ENCODE measurements at regions of chr16 and their contacts with region 1.

Region 1: GRCh38 chr16:2682209-2683021 is at the start of gene KCTD5:
- DNase-seq: peak; percentile 98
- H3K4me3 Mint-ChIP-seq: peak within 1 kb of the TSS; percentile 94
- H3K27ac Mint-ChIP-seq: peak within 1 kb of the TSS; percentile 93
- H3K4me1 Mint-ChIP-seq: peaks cover 28% of the 10 kb centered on the region
- H3K27me3 Mint-ChIP-seq: no peaks in the 10 kb centered on the region
- total RNA-seq, gene KCTD5: 61.8 to 62.7 TPM

Region 2: GRCh38 chr16:2609832-2610470 is 72.5 kb before region 1 on chr16:
- CTCF ChIA-PET with region 1: no interaction called
- POLR2A ChIA-PET with region 1: no interaction called
- intact Hi-C with region 1: no loop called
- DNase-seq: no peak
- H3K4me3 Mint-ChIP-seq: no peak overlapping the region
- H3K27ac Mint-ChIP-seq: no peak overlapping the region
- H3K4me1 Mint-ChIP-seq: peaks cover 11% of the 10 kb centered on the region
- H3K27me3 Mint-ChIP-seq: no peaks in the 10 kb centered on the region

Region 3: DNA sequence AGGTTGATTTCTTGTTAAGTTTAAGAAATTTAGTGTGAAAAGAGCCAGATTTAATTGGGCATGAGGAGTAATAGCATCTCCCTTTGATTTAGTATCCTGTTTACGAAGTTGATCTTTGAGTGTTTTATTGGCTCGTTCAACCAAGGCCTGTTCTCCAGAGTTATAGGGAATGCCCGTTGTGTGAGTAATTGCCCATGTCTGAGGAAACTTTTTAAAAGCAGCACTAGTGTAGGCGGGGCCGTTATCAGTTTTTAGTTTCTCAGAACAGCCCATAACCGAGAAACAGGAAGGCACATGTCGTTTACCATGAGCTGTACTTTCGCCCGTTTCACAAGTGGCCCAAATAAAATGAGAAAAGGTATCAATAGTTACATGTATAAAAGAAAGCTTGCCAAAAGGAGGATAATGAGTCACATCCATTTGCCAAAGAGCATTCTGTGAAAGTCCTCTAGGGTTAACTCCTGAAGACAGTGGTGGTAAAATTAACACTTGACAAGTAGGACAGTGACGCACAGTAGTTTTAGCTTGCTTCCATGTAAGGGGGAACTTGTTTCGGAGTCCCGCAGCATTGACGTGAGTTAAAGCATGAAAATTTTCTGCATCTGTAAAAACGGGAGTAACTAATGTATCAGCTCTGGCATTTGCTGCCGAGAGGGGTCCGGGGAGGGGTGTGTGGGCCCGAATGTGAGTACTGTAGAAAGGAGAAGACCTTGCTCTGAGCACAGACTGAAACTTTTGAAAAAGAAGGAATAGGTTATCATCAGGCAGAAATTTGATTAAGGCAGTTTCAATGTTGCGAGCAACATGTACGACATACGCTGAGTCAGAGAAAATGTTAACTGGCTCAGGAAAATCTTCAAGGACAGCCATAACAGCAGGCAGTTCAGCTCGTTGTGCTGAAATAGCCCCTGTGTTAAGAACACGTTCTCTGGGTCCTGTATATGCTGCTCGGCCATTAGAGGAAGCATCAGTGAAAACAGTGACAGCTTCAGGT is 18.6 kb before region 1 on chr16:
- CTCF ChIA-PET with region 1: interaction called, 8 read pairs
- POLR2A ChIA-PET with region 1: interaction called, 7 read pairs
- intact Hi-C with region 1: loop called (anchors 1 kb)
- DNase-seq: peak; percentile 87
- H3K4me3 Mint-ChIP-seq: peak overlapping the region; percentile 88
- H3K27ac Mint-ChIP-seq: peak overlapping the region; percentile 98
- H3K4me1 Mint-ChIP-seq: peaks cover 79% of the 10 kb centered on the region
- H3K27me3 Mint-ChIP-seq: no peaks in the 10 kb centered on the region

Region 4: DNA sequence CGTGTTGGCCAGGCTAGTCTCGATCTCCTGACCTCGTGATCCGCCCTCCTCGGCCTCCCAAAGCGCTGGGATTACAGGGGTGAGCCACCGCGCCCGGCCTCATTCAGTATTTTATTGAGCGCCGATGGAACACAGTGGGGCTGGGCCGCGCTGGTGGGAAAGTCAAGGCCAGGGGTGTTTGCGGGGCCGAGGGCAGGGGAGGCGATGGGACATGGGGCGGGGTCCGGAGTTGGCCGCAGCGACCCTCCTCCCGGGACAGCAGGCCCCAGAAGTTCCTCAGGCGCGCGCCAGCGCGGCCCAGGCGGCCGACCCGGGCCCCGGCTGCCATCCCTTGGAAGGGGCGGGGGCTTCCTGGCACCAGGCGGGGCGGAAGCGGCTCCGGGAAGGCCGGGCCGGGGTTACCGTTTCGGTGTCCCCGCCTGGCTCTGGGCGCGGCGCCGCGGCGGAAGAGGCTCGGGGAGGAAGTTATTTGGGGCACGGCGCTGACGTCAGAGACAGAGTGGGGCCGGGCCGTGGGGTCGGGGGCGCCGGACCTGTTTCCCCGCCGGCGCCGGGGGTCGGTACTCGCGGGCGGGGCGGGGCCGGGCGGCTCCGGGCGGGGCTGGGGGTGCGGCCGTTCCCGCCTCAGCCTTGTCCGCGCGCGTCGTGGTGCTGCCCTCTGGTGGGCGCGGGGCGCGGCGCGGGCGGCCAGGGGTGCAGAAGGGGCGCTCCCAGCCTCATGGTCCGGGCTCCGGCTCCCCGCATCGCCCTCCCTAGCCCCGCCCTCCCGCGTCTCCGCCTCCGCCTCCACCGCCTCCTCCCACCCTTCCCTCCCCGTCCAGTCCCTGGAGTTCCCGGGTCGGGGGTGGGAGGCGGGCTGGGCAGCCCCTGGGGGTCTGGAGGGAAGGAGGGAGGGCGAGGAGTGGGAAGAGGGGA is 38.6 kb after region 1 on chr16:
- CTCF ChIA-PET with region 1: no interaction called
- POLR2A ChIA-PET with region 1: no interaction called
- intact Hi-C with region 1: loop called (anchors 2 kb)
- DNase-seq: peak; percentile 93
- H3K4me3 Mint-ChIP-seq: peak overlapping the region; percentile 75
- H3K27ac Mint-ChIP-seq: peak overlapping the region; percentile 67
- H3K4me1 Mint-ChIP-seq: peaks cover 2% of the 10 kb centered on the region
- H3K27me3 Mint-ChIP-seq: peaks cover 4% of the 10 kb centered on the region

Region 5: GRCh38 chr16:2752035-2752849 is 69.8 kb after region 1 on chr16 and contains the start of gene SRRM2:
- CTCF ChIA-PET with region 1: no interaction called
- POLR2A ChIA-PET with region 1: no interaction called
- intact Hi-C with region 1: no loop called
- DNase-seq: peak; percentile 97
- H3K4me3 Mint-ChIP-seq: peak within 1 kb of the TSS; percentile 96
- H3K27ac Mint-ChIP-seq: peak within 1 kb of the TSS; percentile 99
- H3K4me1 Mint-ChIP-seq: peaks cover 45% of the 10 kb centered on the region
- H3K27me3 Mint-ChIP-seq: no peaks in the 10 kb centered on the region
- total RNA-seq, gene SRRM2: 483 to 526 TPM

Region 6: GRCh38 chr16:2777231-2777902 is 95.0 kb after region 1 on chr16 and contains the start of gene ELOB:
- CTCF ChIA-PET with region 1: no interaction called
- POLR2A ChIA-PET with region 1: no interaction called
- intact Hi-C with region 1: loop called (anchors 5 kb)
- DNase-seq: peak; percentile 93
- H3K4me3 Mint-ChIP-seq: peak within 1 kb of the TSS; percentile 96
- H3K27ac Mint-ChIP-seq: peak within 1 kb of the TSS; percentile 98
- H3K4me1 Mint-ChIP-seq: peaks cover 31% of the 10 kb centered on the region
- H3K27me3 Mint-ChIP-seq: no peaks in the 10 kb centered on the region
- total RNA-seq, gene ELOB: 165 to 175 TPM